Activated T-helper 1 cell treated with anti-CD3 and anti-CD28 coated beads, Interleukin-12 subunit alpha, Interleukin-12 subunit beta, Interleukin-2, Interleukin-4 antibody, amounts not matched to agents 30 ng/mL and 10 ng/mL and 1 ng/mL, durations not matched to agents 14 hours and 24 hours and 36 hours (primary cell): ENCODE measurements at regions of chr11 and their contacts with region 1.

Region 1: DNA sequence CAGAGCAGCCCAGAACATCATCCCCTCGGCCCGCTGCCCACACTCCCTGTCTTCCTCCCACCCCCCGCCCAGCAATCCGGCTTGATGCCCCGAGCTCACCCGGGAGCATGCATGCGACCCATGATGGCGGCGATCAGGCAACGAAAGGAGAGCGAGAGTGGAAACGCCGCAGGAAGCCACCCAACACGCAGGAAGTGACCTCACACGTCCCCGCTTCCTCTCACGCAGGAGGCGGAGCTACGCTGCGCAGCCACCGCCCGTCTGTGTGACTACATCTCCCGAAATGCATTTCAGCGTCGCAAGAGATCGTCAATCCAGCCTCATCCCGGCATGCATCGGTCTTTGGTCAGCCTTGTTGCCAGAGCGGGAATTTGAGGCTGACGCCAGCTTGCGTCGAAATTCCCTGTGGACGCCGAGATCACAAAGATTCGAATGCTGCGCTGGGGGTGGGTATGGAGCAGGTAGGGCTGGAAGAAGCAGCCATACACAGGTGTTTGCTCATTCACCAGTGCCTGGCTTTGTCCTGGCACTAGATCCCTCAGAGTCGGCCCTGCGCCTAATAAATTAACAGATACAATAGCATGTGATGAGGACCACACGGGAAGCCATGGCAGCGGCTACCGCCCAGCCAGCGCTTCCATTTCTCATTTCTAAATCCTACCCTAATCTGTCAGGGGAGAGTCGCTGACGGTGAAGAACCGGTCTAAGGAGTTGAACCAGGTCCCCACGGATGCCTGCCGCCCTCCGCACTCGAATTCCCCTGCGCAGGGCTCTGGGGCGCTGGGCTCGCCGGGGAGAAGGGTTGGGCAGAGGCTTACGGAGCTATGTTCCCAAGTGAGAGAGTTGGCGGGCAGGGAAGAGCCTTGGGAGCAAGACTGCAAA is at the start of gene RPS13:
- DNase-seq: peak; percentile 93
- H3K4me3 Mint-ChIP-seq: peak within 1 kb of the TSS; percentile 99
- H3K27ac Mint-ChIP-seq: peak within 1 kb of the TSS; percentile 95
- H3K4me1 Mint-ChIP-seq: peaks cover 39% of the 10 kb centered on the region
- H3K27me3 Mint-ChIP-seq: no peaks in the 10 kb centered on the region
- total RNA-seq, gene RPS13: 1,187 and 1,191 TPM in 2 replicates

Region 2: GRCh38 chr11:16902781-16903378 is 174.9 kb before region 1 on chr11:
- intact Hi-C with region 1: loop called (anchors 1 kb)
- DNase-seq: no peak
- H3K4me3 Mint-ChIP-seq: peak overlapping the region; percentile 28
- H3K27ac Mint-ChIP-seq: peak overlapping the region; percentile 86
- H3K4me1 Mint-ChIP-seq: peaks cover 52% of the 10 kb centered on the region
- H3K27me3 Mint-ChIP-seq: no peaks in the 10 kb centered on the region

Region 3: DNA sequence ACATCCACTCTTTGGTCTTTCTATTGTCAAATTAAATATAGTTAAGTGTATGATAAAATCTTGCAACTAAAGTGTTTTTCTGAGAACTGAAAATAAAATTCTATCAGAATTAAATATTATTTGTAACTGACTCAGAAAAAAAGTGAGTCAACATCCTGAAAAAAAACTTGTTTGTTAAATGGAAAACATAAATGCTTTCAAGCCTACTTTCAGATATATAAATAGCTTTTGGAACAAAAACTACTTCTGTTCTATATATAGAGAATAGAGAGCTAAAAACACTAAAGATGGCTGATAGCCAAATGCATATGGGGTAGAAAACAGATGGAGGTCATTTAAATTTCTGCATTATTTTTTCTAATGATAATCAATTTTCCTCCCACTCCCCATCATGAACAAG is 68.2 kb after region 1 on chr11:
- intact Hi-C with region 1: loop called (anchors 5 kb)
- DNase-seq: no peak
- H3K4me3 Mint-ChIP-seq: no peak overlapping the region
- H3K27ac Mint-ChIP-seq: no peak overlapping the region
- H3K4me1 Mint-ChIP-seq: peaks cover 7% of the 10 kb centered on the region
- H3K27me3 Mint-ChIP-seq: no peaks in the 10 kb centered on the region

Region 4: GRCh38 chr11:17276236-17277023 is 198.7 kb after region 1 on chr11 and contains the start of gene NUCB2:
- intact Hi-C with region 1: loop called (anchors 1 kb)
- DNase-seq: peak; percentile 95
- H3K4me3 Mint-ChIP-seq: peak within 1 kb of the TSS; percentile 87
- H3K27ac Mint-ChIP-seq: peak within 1 kb of the TSS; percentile 77
- H3K4me1 Mint-ChIP-seq: peaks cover 48% of the 10 kb centered on the region
- H3K27me3 Mint-ChIP-seq: peaks cover 3% of the 10 kb centered on the region
- total RNA-seq, gene NUCB2: 51.1 and 61.7 TPM in 2 replicates

Region 5: DNA sequence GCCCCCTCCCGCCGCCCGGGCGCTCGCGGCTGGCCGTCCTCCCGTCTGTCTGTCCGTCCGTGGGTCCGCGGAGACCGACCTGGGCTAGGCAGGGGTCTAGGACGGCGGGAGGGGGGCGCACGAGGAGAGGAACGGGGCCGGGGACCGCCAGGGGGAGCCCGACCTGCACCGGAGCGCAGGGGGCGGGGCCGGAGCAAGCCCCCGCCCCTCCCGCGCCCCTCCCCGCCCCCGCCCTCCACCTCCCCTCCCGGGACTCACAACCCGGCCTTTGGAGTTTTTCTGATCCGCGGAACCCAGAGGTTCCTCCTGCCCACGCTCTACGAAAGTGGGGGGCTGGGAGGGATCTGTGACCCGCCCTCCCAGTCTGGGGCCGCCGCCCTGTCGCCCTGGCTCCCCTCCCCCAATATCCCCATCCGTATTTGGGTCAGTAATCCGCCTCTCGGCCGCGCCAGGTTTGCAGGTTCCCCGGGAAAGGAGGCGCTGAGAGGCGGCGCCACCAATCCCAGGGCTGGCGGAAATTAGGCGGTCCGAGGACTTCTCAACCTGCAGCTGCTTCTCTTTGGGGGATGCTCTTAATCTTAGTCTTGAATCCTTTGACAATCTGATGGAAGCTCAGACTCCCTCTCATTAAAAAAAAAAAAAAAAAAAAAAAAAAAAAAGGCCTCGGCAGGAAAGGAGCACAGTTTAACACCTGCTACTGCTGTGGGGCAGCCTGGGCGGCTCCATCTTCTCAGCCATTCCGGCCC is 311.6 kb after region 1 on chr11:
- intact Hi-C with region 1: loop called (anchors 1 kb)
- DNase-seq: peak; percentile 65
- H3K4me3 Mint-ChIP-seq: peak overlapping the region; percentile 78
- H3K27ac Mint-ChIP-seq: peak overlapping the region; percentile 71
- H3K4me1 Mint-ChIP-seq: no peaks in the 10 kb centered on the region
- H3K27me3 Mint-ChIP-seq: peaks cover 26% of the 10 kb centered on the region

Region 6: GRCh38 chr11:18321980-18322711 is 1244.4 kb after region 1 on chr11 and contains the starts of genes GTF2H1 and HPS5:
- intact Hi-C with region 1: loop called (anchors 5 kb)
- DNase-seq: peak; percentile 95
- H3K4me3 Mint-ChIP-seq: peak within 1 kb of the TSS; percentile 93
- H3K27ac Mint-ChIP-seq: peak within 1 kb of the TSS; percentile 99
- H3K4me1 Mint-ChIP-seq: peaks cover 70% of the 10 kb centered on the region
- H3K27me3 Mint-ChIP-seq: no peaks in the 10 kb centered on the region
- total RNA-seq, gene GTF2H1: 52.2 and 56.9 TPM in 2 replicates
- total RNA-seq, gene HPS5: 19.9 and 21.4 TPM in 2 replicates